ENCODE measurements at regions of chr9 and their contacts with region 1.

Region 1: GRCh38 chr9:94772639-94773303 is 46.3 kb downstream of the AOPEP start:
- DNase-seq: no peak
- ATAC-seq: no peak
- H3K4me3 ChIP-seq: no peak overlapping the region
- H3K27ac ChIP-seq: no peak overlapping the region
- H3K4me1 ChIP-seq: no peaks in the 10 kb centered on the region
- H3K27me3 ChIP-seq: no peaks in the 10 kb centered on the region
- CTCF ChIP-seq: no peak

Region 2: DNA sequence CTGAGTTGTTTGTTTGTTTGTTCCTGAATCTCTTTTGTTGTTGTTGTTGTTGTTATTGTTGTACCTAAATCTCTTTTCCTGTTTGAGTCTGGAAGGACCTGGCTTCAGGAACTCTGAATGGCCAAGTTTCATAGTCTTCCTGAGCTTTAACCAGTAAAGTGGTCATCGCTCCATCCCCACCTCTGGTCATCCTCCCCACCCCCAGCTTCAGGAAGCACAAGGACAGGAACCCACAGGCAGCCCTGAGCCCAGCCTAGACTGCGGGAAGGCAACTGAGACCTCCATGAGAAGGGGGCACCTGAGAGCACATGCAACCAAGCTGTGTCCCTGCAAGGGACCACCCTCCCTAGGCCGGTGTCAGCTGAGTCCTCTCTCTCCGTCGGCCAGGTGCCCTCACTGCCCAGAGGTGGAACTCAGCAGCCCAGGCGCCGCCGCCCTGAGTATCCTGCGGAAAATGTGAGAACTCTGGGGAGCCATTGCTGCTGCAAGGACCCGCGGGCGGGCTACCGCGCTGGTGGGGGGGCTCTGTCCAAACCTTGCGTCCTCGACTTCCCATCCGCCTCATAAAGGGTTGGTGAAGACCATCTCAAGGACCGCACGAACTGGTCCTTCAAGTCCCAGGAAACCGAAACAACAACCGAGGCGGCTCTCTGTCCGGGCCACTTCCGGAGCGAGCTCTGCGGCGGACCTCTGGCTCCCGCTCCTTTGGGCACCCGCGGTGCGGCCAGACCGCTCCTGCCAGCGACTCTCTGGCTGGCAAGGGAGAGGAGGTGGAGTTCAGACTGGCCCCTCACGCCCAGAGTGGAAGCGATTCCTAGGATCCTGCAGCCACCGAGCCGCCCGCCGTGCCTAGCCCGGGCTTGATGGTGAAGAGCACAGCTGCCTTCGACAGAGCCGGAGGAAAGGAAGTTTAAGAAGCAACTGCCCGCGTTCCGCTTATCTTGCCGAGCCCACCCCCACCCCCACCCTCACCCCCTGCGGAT is 821.9 kb before region 1 on chr9:
- intact Hi-C with region 1: no loop called
- DNase-seq: peak; percentile 39 to 81 (median 58)
- ATAC-seq: peak; percentile 67 to 79 (median 74)
- H3K4me3 ChIP-seq: peak overlapping the region; percentile 38 to 45 (median 40)
- H3K27ac ChIP-seq: no peak overlapping the region
- H3K4me1 ChIP-seq: peaks cover 0 to 15% (median 6%) of the 10 kb centered on the region in 3 donors
- H3K27me3 ChIP-seq: peaks cover 3 to 41% (median 23%) of the 10 kb centered on the region in 4 donors
- CTCF ChIP-seq: no peak

Region 3: DNA sequence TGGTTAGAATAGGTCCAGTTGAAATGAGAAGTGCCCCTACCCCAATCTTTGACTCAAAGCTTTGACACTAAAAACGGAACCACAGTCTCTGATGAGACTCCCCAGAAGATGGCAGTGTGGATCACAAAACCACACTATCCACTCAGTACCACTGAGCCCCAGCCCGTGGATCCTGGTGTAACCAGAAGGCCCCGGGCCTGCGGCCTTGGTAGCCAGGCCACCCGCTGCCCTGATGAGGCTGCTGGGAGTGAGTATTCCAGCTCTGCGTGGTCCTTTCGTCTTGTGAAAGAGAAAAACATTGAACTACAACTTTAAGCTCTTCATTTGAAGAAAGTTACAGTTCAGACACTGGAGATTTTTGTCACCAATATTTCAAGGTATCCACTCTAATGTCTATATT is 91.3 kb before region 1 on chr9:
- intact Hi-C with region 1: loop called in 1 of 3 experiments (anchors 10 kb)
- DNase-seq: peak; percentile 68 to 90 (median 77)
- ATAC-seq: peak; percentile 98 to 100 (median 99)
- H3K4me3 ChIP-seq: no peak overlapping the region
- H3K27ac ChIP-seq: no peak overlapping the region
- H3K4me1 ChIP-seq: no peaks in the 10 kb centered on the region
- H3K27me3 ChIP-seq: no peaks in the 10 kb centered on the region
- CTCF ChIP-seq: peak in 3 of 4 donors; percentile 46 to 60 (median 53)

Region 4: DNA sequence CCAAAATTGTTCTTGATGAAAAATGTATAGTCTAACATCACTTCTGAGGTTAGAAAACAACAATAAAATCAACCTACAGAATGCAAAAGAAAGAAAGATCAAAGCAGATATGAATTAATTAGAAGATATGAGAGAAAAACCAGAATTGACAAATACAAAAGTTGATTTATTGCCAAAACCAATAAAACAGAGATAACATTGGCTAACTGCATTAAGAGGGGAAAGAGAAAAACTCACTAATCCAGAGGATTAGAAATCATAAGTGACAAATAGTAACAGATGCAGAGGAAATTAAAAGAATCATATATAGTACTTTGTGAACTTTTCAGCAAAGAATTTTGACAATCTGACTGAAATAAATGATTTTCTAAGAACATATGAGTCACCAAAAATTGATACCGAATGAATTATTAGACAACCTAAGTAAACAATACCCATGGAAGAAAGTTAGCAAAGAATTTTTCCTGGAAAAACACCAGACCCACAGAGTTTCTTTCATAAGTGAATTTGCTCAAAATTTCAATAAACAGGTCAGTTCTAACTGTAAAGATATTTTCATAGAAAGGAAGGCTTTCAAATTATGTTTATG is 121.4 kb after region 1 on chr9:
- intact Hi-C with region 1: no loop called
- DNase-seq: no peak
- ATAC-seq: peak; percentile 81 to 84 (median 82)
- H3K4me3 ChIP-seq: no peak overlapping the region
- H3K27ac ChIP-seq: peak overlapping the region in 2 of 4 donors; percentile 35 to 49
- H3K4me1 ChIP-seq: peaks cover 9 to 31% (median 19%) of the 10 kb centered on the region in 3 donors
- H3K27me3 ChIP-seq: no peaks in the 10 kb centered on the region
- CTCF ChIP-seq: no peak

Measured in pancreas (tissue), 10 donors.